ENCODE measurements at regions of chr19 and their contacts with region 1.

Region 1: DNA sequence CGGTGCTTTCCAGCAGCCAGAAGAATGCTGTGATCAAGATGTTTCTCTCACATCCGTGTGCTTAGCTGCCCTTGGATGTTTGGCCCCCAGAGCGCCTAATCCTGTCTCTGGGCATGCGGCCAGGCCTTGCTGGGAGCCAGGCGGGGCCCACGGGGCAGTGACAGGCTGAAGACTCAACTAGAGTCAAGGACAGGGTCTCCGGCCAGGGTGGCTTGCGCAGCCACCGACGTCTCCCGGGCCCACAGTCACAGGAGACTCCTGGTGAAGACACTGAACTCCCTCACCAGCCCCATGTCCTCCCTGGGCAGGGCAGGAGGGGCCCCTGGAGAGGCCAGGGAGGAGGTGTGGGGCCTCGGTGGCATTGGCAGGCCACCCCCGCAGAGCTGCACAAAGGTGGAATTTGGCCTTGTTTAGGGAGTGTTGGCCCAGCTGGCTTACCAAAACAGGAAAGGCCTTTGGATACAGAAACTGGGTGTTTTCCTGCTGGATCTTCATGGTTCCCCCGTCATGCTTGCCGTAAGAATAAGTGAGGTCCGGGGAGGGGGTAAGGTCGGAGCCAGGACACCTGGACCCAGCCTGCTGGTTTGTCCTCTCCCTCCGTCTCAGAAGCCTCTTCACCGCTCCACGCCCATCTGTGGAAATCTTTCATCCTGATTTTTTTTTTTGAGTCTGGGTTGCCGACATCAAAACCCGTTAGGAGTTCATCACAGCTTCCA is 10.0 kb upstream of the NDUFS7 start:
- DNase-seq: no peak
- H3K4me3 ChIP-seq: no peak overlapping the region
- H3K27ac ChIP-seq: no peak overlapping the region
- H3K4me1 ChIP-seq: no peaks in the 10 kb centered on the region
- H3K27me3 ChIP-seq: no peaks in the 10 kb centered on the region
- CTCF ChIP-seq: no peak

Region 2: DNA sequence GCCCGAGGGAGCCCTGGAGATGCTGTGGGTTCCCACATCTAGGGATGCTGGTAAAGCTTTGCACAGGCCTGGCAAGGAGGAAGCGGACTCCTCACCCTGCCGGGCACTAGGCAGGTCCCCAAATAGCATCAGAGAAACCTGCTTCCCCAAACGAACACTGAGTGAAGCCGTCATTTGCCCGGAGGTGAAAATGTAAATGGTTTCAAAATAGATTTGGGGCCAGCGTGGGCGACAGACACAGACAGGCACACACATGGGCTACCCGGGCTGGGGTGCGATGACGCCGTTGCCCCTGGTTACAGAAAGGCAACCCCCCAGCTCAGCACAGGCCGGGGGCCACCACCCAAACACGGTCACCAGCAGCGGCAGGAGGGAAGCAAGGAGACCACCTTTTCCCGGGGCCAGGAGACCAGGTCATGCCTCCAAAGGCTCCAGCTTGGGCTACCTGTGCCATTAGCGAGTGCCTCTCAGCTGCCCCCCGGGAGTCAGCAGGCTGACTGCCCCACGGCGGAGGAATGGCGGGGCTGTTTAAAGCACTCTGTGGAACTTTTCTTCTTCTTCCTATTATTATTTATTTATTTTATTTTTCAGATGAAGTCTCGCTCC is 37.5 kb before region 1 on chr19:
- CTCF ChIA-PET with region 1: no interaction called
- dilution Hi-C with region 1: loop called (anchors 5 kb)
- in situ Hi-C with region 1: no loop called
- intact Hi-C with region 1: no loop called
- DNase-seq: no peak
- H3K4me3 ChIP-seq: no peak overlapping the region
- H3K27ac ChIP-seq: no peak overlapping the region
- H3K4me1 ChIP-seq: no peaks in the 10 kb centered on the region
- H3K27me3 ChIP-seq: no peaks in the 10 kb centered on the region
- CTCF ChIP-seq: no peak

Region 3: GRCh38 chr19:1417145-1417544 is 43.5 kb after region 1 on chr19:
- CTCF ChIA-PET with region 1: no interaction called
- dilution Hi-C with region 1: loop called (anchors 5 kb)
- in situ Hi-C with region 1: no loop called
- intact Hi-C with region 1: no loop called
- DNase-seq: no peak
- H3K4me3 ChIP-seq: no peak overlapping the region
- H3K27ac ChIP-seq: peak overlapping the region; percentile 72
- H3K4me1 ChIP-seq: peaks cover 27% of the 10 kb centered on the region
- H3K27me3 ChIP-seq: no peaks in the 10 kb centered on the region
- CTCF ChIP-seq: no peak

Region 4: GRCh38 chr19:1461862-1462261 is 88.2 kb after region 1 on chr19:
- CTCF ChIA-PET with region 1: no interaction called
- dilution Hi-C with region 1: no loop called
- in situ Hi-C with region 1: no loop called
- intact Hi-C with region 1: no loop called
- DNase-seq: no peak
- H3K4me3 ChIP-seq: no peak overlapping the region
- H3K27ac ChIP-seq: no peak overlapping the region
- H3K4me1 ChIP-seq: peaks cover 17% of the 10 kb centered on the region
- H3K27me3 ChIP-seq: peaks cover 3% of the 10 kb centered on the region
- CTCF ChIP-seq: no peak

Region 5: DNA sequence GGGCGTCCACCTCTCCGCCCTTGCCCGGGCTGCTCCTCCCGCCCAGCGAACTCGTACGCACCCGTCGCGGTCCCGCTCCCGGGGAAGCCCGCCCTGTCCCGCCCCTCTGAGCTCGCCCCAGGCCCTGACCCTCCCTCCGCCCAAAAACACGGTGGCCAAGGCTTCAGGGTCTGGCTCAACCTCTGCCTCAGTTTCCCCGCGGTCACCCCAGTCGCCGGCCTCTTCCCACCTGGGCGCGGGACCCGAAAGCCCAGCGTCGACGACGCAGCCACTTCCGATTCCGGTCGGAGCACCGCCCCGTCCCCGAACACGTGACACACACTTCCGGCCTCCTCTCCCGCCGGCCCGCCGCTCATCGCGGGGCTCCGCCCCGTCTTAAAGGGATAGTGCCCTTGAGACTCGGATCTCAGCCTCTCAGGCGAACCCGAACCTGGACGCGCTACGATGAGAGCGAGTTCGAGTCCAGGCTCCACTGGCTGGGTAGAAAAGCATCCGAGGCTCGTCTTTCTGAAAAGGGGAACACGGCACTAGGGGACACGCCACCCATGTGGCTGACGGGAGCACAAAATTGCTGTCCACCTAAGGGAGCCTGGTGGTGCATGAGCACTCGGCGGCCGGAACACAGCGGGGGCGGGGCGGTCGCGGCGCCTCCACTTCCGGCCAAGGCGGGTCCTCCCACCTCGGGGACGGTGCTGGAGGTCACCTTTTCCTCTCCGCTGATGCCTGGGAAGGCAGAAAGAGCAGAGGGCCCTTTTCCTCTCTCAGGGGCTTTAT is 105.4 kb after region 1 on chr19 and contains the start of gene C19orf25:
- CTCF ChIA-PET with region 1: no interaction called
- dilution Hi-C with region 1: loop called (anchors 10 kb)
- in situ Hi-C with region 1: no loop called
- intact Hi-C with region 1: no loop called
- DNase-seq: peak; percentile 91
- H3K4me3 ChIP-seq: peak within 1 kb of the TSS; percentile 88 to 92 (median 91)
- H3K27ac ChIP-seq: peak within 1 kb of the TSS; percentile 43
- H3K4me1 ChIP-seq: peaks cover 3% of the 10 kb centered on the region
- H3K27me3 ChIP-seq: no peaks in the 10 kb centered on the region
- CTCF ChIP-seq: no peak
- total RNA-seq, gene C19orf25: 25.8 to 41.9 TPM

Region 6: DNA sequence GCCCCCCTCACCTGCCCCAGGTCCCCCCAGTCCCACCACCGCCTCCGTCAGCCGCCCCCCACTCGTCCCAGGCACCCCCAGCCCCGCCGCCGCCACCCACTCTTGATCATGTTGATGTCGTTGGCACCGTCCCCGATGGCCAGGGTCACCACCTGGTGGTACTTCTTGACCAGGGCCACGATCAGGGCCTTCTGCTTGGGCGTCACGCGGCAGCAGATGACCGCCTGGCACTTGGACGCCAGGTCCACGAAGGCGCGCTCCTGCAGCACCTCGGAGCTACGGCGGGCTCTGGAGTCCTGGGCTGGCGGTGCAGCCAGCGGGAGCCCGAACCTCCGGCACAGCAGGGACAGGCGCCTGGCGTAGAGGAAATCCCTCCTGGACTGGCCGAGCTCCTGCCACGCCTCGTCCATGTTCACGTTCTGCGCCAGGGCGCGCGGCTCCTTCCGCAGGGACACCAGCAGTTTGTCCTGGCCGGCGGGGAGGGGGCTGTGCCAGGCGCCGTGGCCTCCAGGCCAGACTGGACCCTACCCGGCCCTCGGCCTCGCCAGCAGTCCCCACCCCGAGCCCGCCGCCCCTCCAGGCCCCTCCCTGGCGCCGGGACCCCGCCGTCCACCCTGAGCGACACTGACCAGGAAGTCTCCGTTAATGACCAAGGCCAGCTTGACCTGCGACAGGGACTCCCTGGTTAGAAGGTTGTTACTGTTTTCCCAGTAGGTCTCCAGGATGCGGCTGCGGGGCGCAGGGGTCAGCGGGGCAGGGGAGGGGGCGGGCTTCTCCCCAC is 415.8 kb after region 1 on chr19:
- CTCF ChIA-PET with region 1: no interaction called
- dilution Hi-C with region 1: no loop called
- in situ Hi-C with region 1: no loop called
- intact Hi-C with region 1: no loop called
- DNase-seq: peak; percentile 13
- H3K4me3 ChIP-seq: no peak overlapping the region
- H3K27ac ChIP-seq: no peak overlapping the region
- H3K4me1 ChIP-seq: no peaks in the 10 kb centered on the region
- H3K27me3 ChIP-seq: no peaks in the 10 kb centered on the region
- CTCF ChIP-seq: no peak